Right cardiac atrium (tissue), 5 donors: ENCODE measurements at regions of chr17 and their contacts with region 1.

Region 1: DNA sequence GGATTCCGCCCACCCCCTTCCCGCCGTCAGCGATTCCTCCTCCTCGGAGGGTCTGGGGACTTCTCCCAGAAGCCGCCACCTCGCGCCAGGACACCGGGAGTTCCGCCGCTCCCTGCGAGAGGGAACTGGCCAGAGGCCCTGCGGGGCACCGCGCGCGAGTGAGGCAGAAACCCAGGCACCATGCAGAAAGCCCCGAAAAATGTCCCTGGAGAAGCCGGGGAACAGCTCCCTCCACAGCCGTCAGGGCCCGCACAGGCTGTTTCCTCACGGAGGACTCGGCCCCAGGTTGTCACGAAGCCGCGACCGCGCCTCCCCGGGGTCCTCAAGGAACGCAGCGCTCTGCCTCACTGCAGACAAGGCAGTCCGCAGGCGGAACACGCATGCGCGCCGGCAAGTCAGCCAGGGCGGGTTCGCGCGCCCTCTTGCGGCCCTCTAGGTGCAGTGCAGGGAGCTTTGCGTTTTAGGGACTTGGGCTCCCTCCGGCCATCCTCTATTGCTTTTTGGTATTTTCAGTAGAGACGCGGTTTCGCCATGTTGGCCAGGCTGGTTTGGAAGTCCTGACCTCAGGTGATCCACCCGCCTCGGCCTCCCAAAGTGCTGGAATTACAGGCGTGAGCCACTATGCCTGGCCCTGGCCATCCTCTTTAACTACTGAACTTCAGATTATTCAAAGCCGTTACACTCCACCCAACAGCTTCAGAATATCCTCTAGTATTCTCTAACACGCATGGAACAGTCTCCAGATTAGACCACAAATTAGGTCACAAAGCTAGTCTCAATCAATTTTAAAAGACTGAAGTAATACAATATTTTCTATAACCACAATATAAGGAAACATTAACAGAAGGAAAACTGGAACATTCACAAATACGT is 20.3 kb upstream of the ZNF287 start:
- DNase-seq: peak; percentile 92 to 98 (median 97)
- ATAC-seq: peak; percentile 91 to 92
- H3K4me3 ChIP-seq: peak overlapping the region; percentile 60
- H3K27ac ChIP-seq: peak overlapping the region; percentile 46
- H3K4me1 ChIP-seq: no peaks in the 10 kb centered on the region
- H3K27me3 ChIP-seq: no peaks in the 10 kb centered on the region

Region 2: GRCh38 chr17:16521070-16521727 is 68.1 kb before region 1 on chr17:
- intact Hi-C with region 1: no loop called
- DNase-seq: peak; percentile 66 to 73 (median 73)
- ATAC-seq: peak; percentile 90 to 93
- H3K4me3 ChIP-seq: no peak overlapping the region
- H3K27ac ChIP-seq: no peak overlapping the region
- H3K4me1 ChIP-seq: no peaks in the 10 kb centered on the region
- H3K27me3 ChIP-seq: no peaks in the 10 kb centered on the region

Region 3: DNA sequence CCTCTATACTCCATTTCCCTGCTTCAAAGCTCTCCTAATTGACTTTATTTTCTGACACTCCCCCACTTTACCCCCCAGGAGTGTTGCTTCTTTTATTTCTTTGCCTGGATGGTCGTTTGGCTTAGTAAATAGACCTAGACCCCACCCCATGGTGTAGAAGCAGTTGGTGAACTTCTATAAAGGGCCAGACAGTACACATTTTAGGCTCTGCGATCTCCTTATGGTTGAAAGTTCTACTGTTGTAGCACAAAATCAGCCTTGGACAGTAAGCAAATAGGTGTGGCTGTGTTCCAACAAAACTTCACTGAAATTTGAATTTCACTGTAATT is 52.2 kb before region 1 on chr17:
- intact Hi-C with region 1: loop called in 1 of 4 experiments (anchors 5 kb)
- DNase-seq: no peak
- ATAC-seq: no peak
- H3K4me3 ChIP-seq: no peak overlapping the region
- H3K27ac ChIP-seq: no peak overlapping the region
- H3K4me1 ChIP-seq: no peaks in the 10 kb centered on the region
- H3K27me3 ChIP-seq: no peaks in the 10 kb centered on the region

Region 4: DNA sequence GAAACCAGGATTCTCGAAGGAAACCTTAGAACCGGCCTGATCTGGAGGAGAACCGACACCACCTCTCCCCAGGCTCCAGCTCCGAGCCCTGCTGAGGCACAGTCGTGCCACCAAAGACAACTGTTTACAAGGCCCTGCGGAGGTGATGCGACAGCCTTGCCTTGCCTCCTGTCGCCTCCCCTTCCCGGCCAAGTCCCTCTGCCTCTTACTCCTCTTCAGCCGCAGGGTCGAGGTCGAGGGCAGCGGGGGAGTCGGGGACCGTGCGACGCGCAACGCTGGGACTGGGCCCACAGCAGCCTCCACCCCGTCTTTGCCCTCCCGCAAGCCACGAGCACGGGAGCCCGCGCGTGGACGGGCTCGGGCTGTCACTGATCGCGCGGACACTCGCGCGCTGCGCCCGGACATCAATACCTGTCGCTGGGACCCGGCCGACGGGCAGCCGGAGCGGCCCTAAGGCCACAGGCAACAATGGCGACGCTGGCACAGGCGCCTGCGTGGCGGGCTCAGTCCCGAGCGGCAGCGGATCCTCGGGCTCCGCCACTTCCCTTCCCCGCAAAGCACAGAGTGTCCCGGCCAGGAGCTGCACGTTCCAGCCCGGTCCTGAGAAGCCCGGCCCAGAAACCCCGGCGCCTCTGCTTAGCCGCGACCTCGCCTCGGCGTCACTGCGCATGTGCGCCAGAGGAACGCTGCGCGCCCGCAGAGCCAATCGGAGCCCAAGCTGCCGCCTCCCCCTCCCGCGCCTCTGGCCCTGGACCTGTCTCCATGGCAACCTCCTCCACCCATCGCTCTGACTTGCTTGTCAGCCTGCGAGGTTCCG is 20.6 kb before region 1 on chr17 and contains the start of gene ZNF287:
- intact Hi-C with region 1: no loop called
- DNase-seq: peak; percentile 96 to 99 (median 98)
- ATAC-seq: peak; percentile 99 to 100
- H3K4me3 ChIP-seq: peak within 1 kb of the TSS; percentile 71
- H3K27ac ChIP-seq: peak within 1 kb of the TSS; percentile 36
- H3K4me1 ChIP-seq: no peaks in the 10 kb centered on the region
- H3K27me3 ChIP-seq: no peaks in the 10 kb centered on the region
- total RNA-seq, gene ZNF287: 9.4 to 12.5 (median 11.0) TPM

Region 5: GRCh38 chr17:16653209-16654041 is 64.1 kb after region 1 on chr17 and contains the start of gene ZNF624:
- intact Hi-C with region 1: loop called in 1 of 4 experiments (anchors 10 kb)
- DNase-seq: peak; percentile 97 to 99 (median 98)
- ATAC-seq: peak; percentile 99
- H3K4me3 ChIP-seq: peak within 1 kb of the TSS; percentile 55
- H3K27ac ChIP-seq: peak within 1 kb of the TSS; percentile 86
- H3K4me1 ChIP-seq: no peaks in the 10 kb centered on the region
- H3K27me3 ChIP-seq: no peaks in the 10 kb centered on the region
- total RNA-seq, gene ZNF624: 1.3 to 3.7 (median 1.9) TPM